CD4-positive, alpha-beta T cell (primary cell): ENCODE measurements at regions of chr12 and their contacts with region 1.

Region 1: DNA sequence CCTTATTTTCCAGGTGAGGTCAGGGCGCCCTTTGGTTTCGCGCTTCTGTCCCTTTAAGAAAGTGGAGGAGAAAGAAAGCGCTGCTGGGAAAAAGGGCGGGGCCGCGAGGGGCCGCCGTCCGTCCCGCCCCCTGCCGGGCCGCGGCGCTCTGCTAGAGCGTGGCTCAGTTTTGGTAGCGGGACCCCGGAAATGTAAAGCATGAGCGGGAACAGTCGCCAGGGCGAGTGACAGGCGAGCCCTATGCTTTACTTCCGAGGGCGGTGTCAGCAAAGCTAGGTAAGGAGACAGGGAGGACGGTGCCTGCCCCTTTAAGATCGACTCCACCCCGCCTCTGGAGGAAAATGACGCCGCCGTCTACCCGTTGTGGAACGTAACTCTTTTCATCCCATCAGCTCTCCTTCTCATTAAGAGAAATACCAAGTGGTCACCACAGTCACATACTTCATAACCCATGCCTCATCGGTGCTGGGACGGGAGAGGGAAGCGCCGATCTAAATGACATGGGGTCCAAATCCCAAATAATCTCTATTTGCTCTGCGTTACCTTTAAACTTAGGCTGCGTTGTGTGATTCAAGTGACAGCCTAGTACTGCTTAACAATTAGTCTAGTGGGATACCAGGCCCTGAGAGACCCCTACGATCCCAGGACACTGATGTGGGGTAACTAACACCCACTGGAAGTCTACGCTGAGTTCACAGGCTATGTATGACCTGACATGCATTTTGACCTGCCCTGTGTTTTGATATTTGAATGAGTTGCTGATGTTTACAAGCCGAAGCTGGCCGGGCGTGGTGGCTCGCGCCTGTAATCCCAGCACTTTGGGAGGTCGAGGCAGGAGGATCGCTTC is at the start of gene ETFBKMT:
- DNase-seq: peak; percentile 83 to 97 (median 90)
- ATAC-seq: peak; percentile 97
- H3K4me3 ChIP-seq: peak within 1 kb of the TSS; percentile 68
- H3K4me3 Mint-ChIP-seq: peak within 1 kb of the TSS; percentile 99
- H3K27ac ChIP-seq: peak within 1 kb of the TSS; percentile 68 to 91
- H3K27ac Mint-ChIP-seq: peak within 1 kb of the TSS; percentile 97
- H3K4me1 ChIP-seq: peaks cover 12% of the 10 kb centered on the region
- H3K4me1 Mint-ChIP-seq: peaks cover 19% of the 10 kb centered on the region
- H3K27me3 ChIP-seq: no peaks in the 10 kb centered on the region
- H3K27me3 Mint-ChIP-seq: no peaks in the 10 kb centered on the region
- CTCF ChIP-seq: no peak
- total RNA-seq, gene ETFBKMT: 0.38 to 0.92 TPM

Region 2: GRCh38 chr12:30754709-30755394 is 904.5 kb before region 1 on chr12 and contains the start of gene CAPRIN2:
- CTCF ChIA-PET with region 1: no interaction called
- POLR2A ChIA-PET with region 1: no interaction called
- intact Hi-C with region 1: loop called in 1 of 2 experiments (anchors 10 kb)
- DNase-seq: peak; percentile 86 to 97 (median 94)
- ATAC-seq: peak; percentile 90
- H3K4me3 ChIP-seq: peak within 1 kb of the TSS; percentile 81
- H3K4me3 Mint-ChIP-seq: peak within 1 kb of the TSS; percentile 94
- H3K27ac ChIP-seq: peak within 1 kb of the TSS; percentile 51 to 76
- H3K27ac Mint-ChIP-seq: peak within 1 kb of the TSS; percentile 77
- H3K4me1 ChIP-seq: peaks cover 16% of the 10 kb centered on the region
- H3K4me1 Mint-ChIP-seq: peaks cover 45% of the 10 kb centered on the region
- H3K27me3 ChIP-seq: no peaks in the 10 kb centered on the region
- H3K27me3 Mint-ChIP-seq: no peaks in the 10 kb centered on the region
- CTCF ChIP-seq: peak; percentile 18
- total RNA-seq, gene CAPRIN2: 21.2 to 24.6 TPM

Region 3: GRCh38 chr12:31406345-31406744 is 253.0 kb before region 1 on chr12:
- CTCF ChIA-PET with region 1: no interaction called
- POLR2A ChIA-PET with region 1: no interaction called
- intact Hi-C with region 1: no loop called
- DNase-seq: no peak
- ATAC-seq: no peak
- H3K4me3 ChIP-seq: no peak overlapping the region
- H3K4me3 Mint-ChIP-seq: no peak overlapping the region
- H3K27ac ChIP-seq: no peak overlapping the region
- H3K27ac Mint-ChIP-seq: no peak overlapping the region
- H3K4me1 ChIP-seq: no peaks in the 10 kb centered on the region
- H3K4me1 Mint-ChIP-seq: no peaks in the 10 kb centered on the region
- H3K27me3 ChIP-seq: no peaks in the 10 kb centered on the region
- H3K27me3 Mint-ChIP-seq: peaks cover 7% of the 10 kb centered on the region
- CTCF ChIP-seq: no peak

Region 4: GRCh38 chr12:31603546-31604009 is 55.7 kb before region 1 on chr12:
- CTCF ChIA-PET with region 1: no interaction called
- POLR2A ChIA-PET with region 1: no interaction called
- intact Hi-C with region 1: no loop called
- DNase-seq: no peak
- ATAC-seq: no peak
- H3K4me3 ChIP-seq: no peak overlapping the region
- H3K4me3 Mint-ChIP-seq: no peak overlapping the region
- H3K27ac ChIP-seq: no peak overlapping the region
- H3K27ac Mint-ChIP-seq: no peak overlapping the region
- H3K4me1 ChIP-seq: no peaks in the 10 kb centered on the region
- H3K4me1 Mint-ChIP-seq: no peaks in the 10 kb centered on the region
- H3K27me3 ChIP-seq: peaks cover 0 to 12% of the 10 kb centered on the region in 2 experiments
- H3K27me3 Mint-ChIP-seq: peaks cover 19% of the 10 kb centered on the region
- CTCF ChIP-seq: no peak

Region 5: DNA sequence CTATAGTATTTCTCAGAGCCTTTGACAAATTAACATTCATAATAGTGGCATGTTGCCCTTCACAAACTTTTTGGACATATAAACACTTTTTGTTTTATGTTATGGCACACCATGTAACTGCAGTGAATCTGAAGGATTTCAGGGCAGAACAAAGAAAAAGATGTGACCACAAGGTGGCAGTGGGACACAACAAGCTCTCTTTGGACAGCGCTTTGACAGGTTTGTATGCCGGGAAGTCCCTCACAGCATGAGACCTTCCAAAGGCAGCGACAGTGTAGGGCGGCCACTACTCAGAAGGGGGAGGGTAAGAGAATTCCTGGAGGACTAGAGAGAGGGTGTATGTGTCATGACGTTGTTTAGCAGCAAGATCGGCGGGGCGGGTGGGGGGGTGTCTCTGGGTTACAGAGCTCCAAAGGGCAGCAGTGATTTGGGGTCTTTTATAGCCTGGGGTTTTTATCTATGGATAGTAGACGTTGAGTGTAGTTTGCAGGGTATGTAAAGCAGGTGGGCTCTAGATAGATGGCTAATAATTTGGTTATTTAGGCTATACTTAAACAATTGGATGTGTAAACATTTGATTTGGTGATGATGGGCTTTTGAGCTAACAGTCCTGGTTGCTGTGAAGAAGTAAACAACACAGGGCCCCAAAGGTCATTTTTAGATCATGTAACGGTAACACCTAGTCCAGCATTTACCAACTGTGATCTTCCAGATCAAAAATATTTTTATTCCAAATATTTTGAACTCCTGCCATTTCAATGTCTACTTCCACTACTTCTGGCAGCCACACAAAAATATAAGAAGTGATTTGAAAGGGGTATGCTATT is 23.0 kb after region 1 on chr12:
- CTCF ChIA-PET with region 1: interaction called, 5 read pairs
- POLR2A ChIA-PET with region 1: interaction called, 4 read pairs
- intact Hi-C with region 1: loop called (anchors 2 kb)
- DNase-seq: peak; percentile 42 to 89 (median 58)
- ATAC-seq: peak; percentile 92
- H3K4me3 ChIP-seq: no peak overlapping the region
- H3K4me3 Mint-ChIP-seq: peak overlapping the region; percentile 22
- H3K27ac ChIP-seq: no peak overlapping the region
- H3K27ac Mint-ChIP-seq: peak overlapping the region; percentile 31
- H3K4me1 ChIP-seq: no peaks in the 10 kb centered on the region
- H3K4me1 Mint-ChIP-seq: peaks cover 11% of the 10 kb centered on the region
- H3K27me3 ChIP-seq: no peaks in the 10 kb centered on the region
- H3K27me3 Mint-ChIP-seq: no peaks in the 10 kb centered on the region
- CTCF ChIP-seq: peak; percentile 78

Region 6: GRCh38 chr12:31896514-31897039 is 237.3 kb after region 1 on chr12:
- CTCF ChIA-PET with region 1: no interaction called
- POLR2A ChIA-PET with region 1: interaction called, 11 read pairs
- intact Hi-C with region 1: loop called (anchors 2 to 10 kb)
- DNase-seq: peak; percentile 63 to 97 (median 78)
- ATAC-seq: peak; percentile 96
- H3K4me3 ChIP-seq: no peak overlapping the region
- H3K4me3 Mint-ChIP-seq: peak overlapping the region; percentile 74
- H3K27ac ChIP-seq: peak overlapping the region; percentile 71 to 82
- H3K27ac Mint-ChIP-seq: peak overlapping the region; percentile 93
- H3K4me1 ChIP-seq: peaks cover 69% of the 10 kb centered on the region
- H3K4me1 Mint-ChIP-seq: peaks cover 47% of the 10 kb centered on the region
- H3K27me3 ChIP-seq: no peaks in the 10 kb centered on the region
- H3K27me3 Mint-ChIP-seq: no peaks in the 10 kb centered on the region
- CTCF ChIP-seq: no peak

Region 7: GRCh38 chr12:32312049-32312670 is 652.9 kb after region 1 on chr12:
- CTCF ChIA-PET with region 1: no interaction called
- POLR2A ChIA-PET with region 1: interaction called, 4 read pairs
- intact Hi-C with region 1: loop called in 1 of 2 experiments (anchors 2 kb)
- DNase-seq: peak in 4 of 14 experiments; percentile 4 to 69 (median 64)
- ATAC-seq: peak; percentile 55
- H3K4me3 ChIP-seq: no peak overlapping the region
- H3K4me3 Mint-ChIP-seq: no peak overlapping the region
- H3K27ac ChIP-seq: no peak overlapping the region
- H3K27ac Mint-ChIP-seq: no peak overlapping the region
- H3K4me1 ChIP-seq: no peaks in the 10 kb centered on the region
- H3K4me1 Mint-ChIP-seq: peaks cover 6% of the 10 kb centered on the region
- H3K27me3 ChIP-seq: no peaks in the 10 kb centered on the region
- H3K27me3 Mint-ChIP-seq: no peaks in the 10 kb centered on the region
- CTCF ChIP-seq: peak; percentile 78